ENCODE measurements at regions of chr20 and their contacts with region 1.

Region 1: DNA sequence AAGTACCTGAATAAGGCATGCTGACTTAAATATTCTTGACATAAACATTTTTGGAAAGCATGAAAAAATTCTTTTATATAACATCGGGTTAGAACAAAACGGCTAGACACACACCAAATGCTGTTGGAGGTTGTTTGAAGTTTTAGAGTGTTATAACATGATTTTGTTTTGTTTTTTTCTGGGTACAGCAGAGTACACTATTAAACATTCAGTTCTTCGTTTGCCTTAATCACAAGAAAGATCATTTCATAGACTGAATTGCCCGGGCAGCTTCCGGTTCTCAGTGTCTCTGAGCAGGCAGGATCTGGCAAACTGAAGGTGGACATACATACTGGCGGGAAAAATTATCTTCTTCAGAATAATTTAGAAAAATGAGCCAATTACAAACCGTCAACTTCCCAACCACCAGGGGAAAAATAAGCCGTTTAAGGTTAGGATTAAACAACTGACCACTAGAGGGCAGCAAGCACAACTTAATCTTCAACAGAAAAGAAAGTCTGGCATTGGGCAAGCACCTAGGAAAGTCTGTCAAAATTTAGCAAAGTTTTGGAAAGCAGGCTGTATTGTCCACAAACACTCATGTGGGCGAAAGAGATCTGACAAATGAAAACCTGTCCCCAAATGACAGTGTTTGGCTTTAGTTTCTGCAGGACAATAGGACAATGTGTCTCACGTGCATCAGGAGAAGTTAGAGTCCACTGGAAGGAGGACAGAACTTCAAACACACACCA is 15.0 kb downstream of the ZNF217 start:
- DNase-seq: peak; percentile 48
- H3K4me3 ChIP-seq: 0 out of 2 replicates have a peak overlapping the region, but pooled peaks have one; percentile 15
- H3K27me3 ChIP-seq: no peaks in the 10 kb centered on the region
- CTCF ChIP-seq: peak; percentile 72

Region 2: DNA sequence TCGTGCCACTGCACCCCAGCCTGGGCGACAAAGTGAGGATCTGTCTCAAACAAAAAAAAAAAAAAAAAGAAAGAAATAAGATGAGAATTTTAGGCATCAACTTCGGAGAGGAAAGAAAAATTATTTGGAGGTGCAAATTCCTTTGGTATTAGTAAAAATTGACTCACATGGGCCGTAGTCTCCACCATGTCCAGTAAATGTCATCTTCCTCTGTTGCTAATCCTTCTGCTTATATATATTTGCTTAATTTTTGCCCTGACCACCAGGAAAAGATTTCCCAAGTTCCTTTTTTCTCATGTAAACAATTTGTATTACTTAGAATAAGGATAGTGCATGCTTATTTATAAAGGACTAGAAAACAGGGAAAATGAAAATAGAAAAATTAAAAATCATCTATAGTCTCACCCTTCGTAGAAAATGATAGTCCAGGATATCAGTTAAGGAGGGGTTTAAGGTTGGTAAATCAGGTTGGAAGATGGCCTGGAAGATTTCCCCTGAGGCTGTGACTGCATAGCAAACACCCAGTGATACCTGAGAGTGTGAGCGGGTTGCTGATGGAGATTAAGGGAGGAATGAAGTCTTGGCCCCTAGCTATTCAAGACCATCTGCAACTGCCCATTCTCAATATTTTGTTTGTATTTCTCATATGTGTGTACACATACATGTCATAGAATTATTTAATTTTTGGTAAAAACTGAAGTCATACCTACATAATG is 225.8 kb before region 1 on chr20:
- CTCF ChIA-PET with region 1: no interaction called
- POLR2A ChIA-PET with region 1: no interaction called
- DNase-seq: no peak
- H3K4me3 ChIP-seq: no peak overlapping the region
- H3K27me3 ChIP-seq: no peaks in the 10 kb centered on the region
- CTCF ChIP-seq: no peak

Region 3: GRCh38 chr20:53668992-53669391 is 90.3 kb after region 1 on chr20:
- CTCF ChIA-PET with region 1: no interaction called
- POLR2A ChIA-PET with region 1: no interaction called
- DNase-seq: no peak
- H3K4me3 ChIP-seq: no peak overlapping the region
- H3K27me3 ChIP-seq: no peaks in the 10 kb centered on the region
- CTCF ChIP-seq: no peak

Region 4: GRCh38 chr20:53691060-53691810 is 112.6 kb after region 1 on chr20:
- CTCF ChIA-PET with region 1: no interaction called
- POLR2A ChIA-PET with region 1: no interaction called
- DNase-seq: no peak
- H3K4me3 ChIP-seq: no peak overlapping the region
- H3K27me3 ChIP-seq: no peaks in the 10 kb centered on the region
- CTCF ChIP-seq: no peak

Region 5: GRCh38 chr20:53828682-53829254 is 250.1 kb after region 1 on chr20:
- CTCF ChIA-PET with region 1: interaction called, 11 read pairs
- POLR2A ChIA-PET with region 1: interaction called, 3 read pairs
- DNase-seq: peak; percentile 89
- H3K4me3 ChIP-seq: peak overlapping the region; percentile 29
- H3K27me3 ChIP-seq: no peaks in the 10 kb centered on the region
- CTCF ChIP-seq: no peak

Region 6: GRCh38 chr20:53939572-53940359 is 361.1 kb after region 1 on chr20:
- CTCF ChIA-PET with region 1: interaction called, 24 read pairs
- POLR2A ChIA-PET with region 1: no interaction called
- DNase-seq: peak; percentile 80
- H3K4me3 ChIP-seq: no peak overlapping the region
- H3K27me3 ChIP-seq: no peaks in the 10 kb centered on the region
- CTCF ChIP-seq: peak; percentile 74

Measured in BJ (cell line).